A673 (cell line): ENCODE measurements at regions of chr6 and their contacts with region 1.

Region 1: DNA sequence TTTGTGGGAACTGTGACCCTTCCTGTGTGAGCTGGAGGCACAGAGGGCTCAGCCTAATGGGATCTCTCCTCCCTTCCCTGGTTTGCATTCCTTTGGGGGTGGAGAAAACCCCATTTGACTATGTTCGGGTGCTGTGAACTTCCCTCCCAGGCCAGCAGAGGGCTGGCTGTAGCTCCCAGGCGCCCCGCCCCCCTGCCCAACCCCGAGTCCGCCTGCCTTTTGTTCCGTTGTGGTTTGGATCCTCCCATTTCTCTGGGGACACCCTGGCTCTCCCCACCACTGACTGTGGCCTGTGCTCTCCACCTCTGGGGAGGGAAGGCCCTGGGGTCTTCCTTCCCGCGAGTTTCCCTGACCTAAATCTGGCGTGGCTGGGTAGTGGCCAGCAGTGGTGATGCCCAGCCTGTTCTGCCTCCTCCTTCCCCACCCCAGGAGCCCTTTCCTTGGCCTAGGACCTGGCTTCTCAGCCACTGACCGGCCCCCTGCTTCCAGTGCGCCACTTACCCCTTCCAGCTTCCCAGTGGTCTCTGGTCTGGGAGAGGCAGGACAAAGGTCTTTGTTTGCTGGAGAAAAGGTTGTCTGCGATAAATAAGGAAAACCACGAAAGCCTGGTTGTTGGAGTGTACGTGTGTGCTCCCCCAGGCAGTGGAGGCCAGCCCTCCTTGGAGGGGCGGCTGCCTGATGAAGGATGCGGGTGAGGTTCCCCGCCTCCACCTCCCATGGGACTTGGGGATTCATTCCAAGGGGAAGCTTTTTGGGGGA is 4.9 kb downstream of the VEGFA start:
- DNase-seq: peak; percentile 85
- H3K4me3 ChIP-seq: peak overlapping the region; percentile 76
- H3K27ac ChIP-seq: peak overlapping the region; percentile 98
- H3K4me1 ChIP-seq: peaks cover 15% of the 10 kb centered on the region
- H3K27me3 ChIP-seq: no peaks in the 10 kb centered on the region
- CTCF ChIP-seq: peak; percentile 86

Region 2: GRCh38 chr6:43667245-43668150 is 107.5 kb before region 1 on chr6:
- CTCF ChIA-PET with region 1: interaction called, 3 read pairs
- POLR2A ChIA-PET with region 1: no interaction called
- intact Hi-C with region 1: loop called (anchors 1 kb)
- DNase-seq: peak; percentile 81
- H3K4me3 ChIP-seq: peak overlapping the region; percentile 21
- H3K27ac ChIP-seq: no peak overlapping the region
- H3K4me1 ChIP-seq: peaks cover 14% of the 10 kb centered on the region
- H3K27me3 ChIP-seq: no peaks in the 10 kb centered on the region
- CTCF ChIP-seq: peak; percentile 96